ENCODE measurements at regions of chr19 and their contacts with region 1.

Region 1: GRCh38 chr19:29873024-29873800 is 61.4 kb downstream of the CCNE1 start:
- DNase-seq: peak; percentile 19 to 34
- H3K4me3 ChIP-seq: peak overlapping the region in 1 of 2 donors; percentile 24
- H3K27ac ChIP-seq: no peak overlapping the region
- H3K4me1 ChIP-seq: peaks cover 0 to 16% of the 10 kb centered on the region in 2 donors
- H3K27me3 ChIP-seq: peaks cover 0 to 8% of the 10 kb centered on the region in 2 donors
- CTCF ChIP-seq: peak; percentile 56 to 87 (median 76)
- POLR2A ChIP-seq: no peak

Region 2: DNA sequence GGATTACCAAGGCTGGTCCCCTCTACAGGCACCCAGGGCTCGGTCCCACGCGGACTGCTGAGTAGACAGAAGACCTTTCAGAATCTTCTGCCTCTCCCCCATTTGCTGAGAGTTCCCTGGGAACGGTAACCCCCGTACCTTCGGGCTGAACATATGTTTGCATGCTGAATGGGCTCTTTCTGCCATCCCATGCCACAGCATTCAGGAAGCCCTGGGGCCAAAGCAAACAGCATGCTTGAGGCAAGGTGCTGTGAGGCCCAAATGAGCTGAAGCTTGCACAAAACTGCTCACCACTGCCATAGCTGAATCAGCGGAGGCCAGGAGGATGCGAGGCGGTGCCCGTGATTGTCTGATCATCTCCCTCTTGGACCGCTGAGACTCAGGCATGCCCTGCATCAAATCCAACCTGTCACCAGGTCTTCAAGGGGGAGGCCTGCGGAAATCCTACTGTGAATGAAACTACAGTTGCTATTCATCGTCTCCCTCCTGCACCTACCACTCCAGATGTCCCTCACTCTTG is 141.8 kb before region 1 on chr19:
- intact Hi-C with region 1: loop called (anchors 5 kb)
- DNase-seq: no peak
- H3K4me3 ChIP-seq: no peak overlapping the region
- H3K27ac ChIP-seq: no peak overlapping the region
- H3K4me1 ChIP-seq: no peaks in the 10 kb centered on the region
- H3K27me3 ChIP-seq: no peaks in the 10 kb centered on the region
- CTCF ChIP-seq: no peak
- POLR2A ChIP-seq: no peak

Region 3: DNA sequence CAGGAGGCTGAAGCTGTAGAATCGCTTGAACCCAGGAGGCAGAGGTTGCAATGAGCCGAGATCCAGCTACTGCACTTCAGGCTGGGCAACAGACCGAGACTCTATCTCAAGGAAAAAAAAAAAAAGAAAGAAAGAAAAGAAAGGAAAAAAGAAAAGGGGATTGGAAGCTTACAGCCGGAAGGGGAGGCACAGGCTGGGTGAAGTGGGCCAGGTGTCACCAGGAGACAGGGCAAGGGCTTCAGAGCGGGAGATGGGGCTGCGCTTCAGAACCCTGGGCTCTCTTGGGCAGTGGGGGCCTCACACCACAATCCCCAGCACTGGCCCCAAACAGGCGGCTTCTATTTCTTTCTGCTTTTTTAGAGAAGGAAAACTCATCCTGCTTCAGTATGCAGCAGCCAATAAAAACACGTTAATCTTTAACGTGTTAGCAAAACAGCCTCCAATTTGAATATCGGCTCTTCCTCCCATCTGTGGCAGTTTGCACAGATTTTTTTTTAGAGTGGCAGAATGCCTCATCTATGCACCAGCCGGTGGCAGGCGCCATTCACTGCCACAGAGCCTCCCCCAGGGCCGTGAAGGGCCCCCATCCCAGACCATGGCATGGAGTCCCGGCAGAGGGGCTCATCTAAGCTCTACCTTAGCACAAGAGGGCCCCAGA is 111.5 kb before region 1 on chr19:
- intact Hi-C with region 1: loop called (anchors 10 kb)
- DNase-seq: no peak
- H3K4me3 ChIP-seq: no peak overlapping the region
- H3K27ac ChIP-seq: no peak overlapping the region
- H3K4me1 ChIP-seq: no peaks in the 10 kb centered on the region
- H3K27me3 ChIP-seq: no peaks in the 10 kb centered on the region
- CTCF ChIP-seq: no peak
- POLR2A ChIP-seq: no peak